ENCODE measurements at regions of chrX and their contacts with region 1.

Region 1: GRCh38 chrX:135632353-135632752 is 81.1 kb upstream of the CT45A1 start:
- DNase-seq: no peak
- ATAC-seq: no peak
- H3K4me3 ChIP-seq: no peak overlapping the region
- H3K27ac ChIP-seq: no peak overlapping the region
- H3K4me1 ChIP-seq: no peaks in the 10 kb centered on the region
- H3K27me3 ChIP-seq: no peaks in the 10 kb centered on the region
- CTCF ChIP-seq: peak in 1 of 3 experiments; percentile 22; a peak in 1 of 6 replicates
- POLR2A ChIP-seq: no peak
- RAD21 ChIP-seq: peak; percentile 45

Region 2: GRCh38 chrX:135531813-135532212 is 100.5 kb before region 1 on chrX:
- CTCF ChIA-PET with region 1: no interaction called
- POLR2A ChIA-PET with region 1: no interaction called
- RAD21 ChIA-PET with region 1: no interaction called
- intact Hi-C with region 1: no loop called
- DNase-seq: no peak
- ATAC-seq: no peak
- H3K4me3 ChIP-seq: no peak overlapping the region
- H3K27ac ChIP-seq: no peak overlapping the region
- H3K4me1 ChIP-seq: no peaks in the 10 kb centered on the region
- H3K27me3 ChIP-seq: no peaks in the 10 kb centered on the region
- CTCF ChIP-seq: no peak
- POLR2A ChIP-seq: no peak
- RAD21 ChIP-seq: no peak

Region 3: DNA sequence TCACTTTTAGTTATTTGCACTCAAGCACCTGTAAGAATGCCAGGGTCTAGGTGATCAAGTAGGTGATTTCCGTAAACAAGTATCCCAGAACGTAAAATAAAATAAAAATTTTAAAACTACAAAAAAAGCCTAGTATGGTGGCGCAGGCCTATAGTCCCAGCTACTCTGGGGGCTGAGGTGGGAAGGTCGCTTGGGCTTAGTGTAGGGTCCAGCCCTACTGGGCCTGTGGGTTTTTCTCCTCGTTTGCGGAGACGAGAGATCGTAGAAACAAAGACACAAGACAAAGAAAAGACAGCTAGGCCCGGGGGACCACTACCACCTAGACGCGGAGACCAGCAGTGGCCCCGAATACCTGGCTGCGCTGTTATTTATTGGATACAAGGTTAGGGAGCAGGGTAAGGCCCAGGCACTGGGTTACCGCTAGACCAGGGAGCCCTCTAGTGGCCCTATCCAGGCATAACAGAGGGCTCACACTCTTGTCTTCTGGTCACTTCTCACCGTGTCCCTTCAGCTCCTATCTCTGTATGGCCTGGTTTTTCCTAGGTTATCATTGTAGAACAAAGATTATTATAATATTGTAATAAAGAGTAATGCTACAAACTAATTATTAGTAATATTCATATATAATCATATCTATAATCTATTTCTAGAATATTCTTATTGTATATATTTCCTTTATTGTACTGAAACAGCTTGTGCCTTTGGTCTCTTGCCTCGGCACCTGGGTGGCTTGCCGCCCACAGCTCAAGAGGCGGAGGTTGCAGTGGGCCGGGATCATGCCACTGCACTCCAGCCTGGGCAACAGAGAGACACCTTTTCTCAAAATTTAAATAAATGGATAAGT is 299.5 kb after region 1 on chrX:
- CTCF ChIA-PET with region 1: no interaction called
- POLR2A ChIA-PET with region 1: no interaction called
- RAD21 ChIA-PET with region 1: no interaction called
- intact Hi-C with region 1: loop called (anchors 5 kb)
- DNase-seq: peak; percentile 6
- ATAC-seq: peak; percentile 90
- H3K4me3 ChIP-seq: no peak overlapping the region
- H3K27ac ChIP-seq: no peak overlapping the region
- H3K4me1 ChIP-seq: no peaks in the 10 kb centered on the region
- H3K27me3 ChIP-seq: no peaks in the 10 kb centered on the region
- CTCF ChIP-seq: peak; percentile 52 to 60 (median 54)
- POLR2A ChIP-seq: no peak
- RAD21 ChIP-seq: peak; percentile 51

Measured in HCT116 (cell line).